Right cardiac atrium (tissue), 5 donors: ENCODE measurements at regions of chr12 and their contacts with region 1.

Region 1: GRCh38 chr12:13196130-13196921 is at the start of gene EMP1:
- DNase-seq: peak; percentile 94 to 97 (median 97)
- ATAC-seq: peak; percentile 90 to 92
- H3K4me3 ChIP-seq: peak within 1 kb of the TSS; percentile 63
- H3K27ac ChIP-seq: peak within 1 kb of the TSS; percentile 99
- H3K4me1 ChIP-seq: peaks cover 14% of the 10 kb centered on the region
- H3K27me3 ChIP-seq: no peaks in the 10 kb centered on the region
- total RNA-seq, gene EMP1: 134 to 401 (median 261) TPM

Region 2: GRCh38 chr12:13114251-13115052 is 81.9 kb before region 1 on chr12:
- intact Hi-C with region 1: loop called in 1 of 4 experiments (anchors 5 kb)
- DNase-seq: peak in 1 of 3 donors; percentile 60
- ATAC-seq: peak in 1 of 2 donors; percentile 28
- H3K4me3 ChIP-seq: no peak overlapping the region
- H3K27ac ChIP-seq: no peak overlapping the region
- H3K4me1 ChIP-seq: peaks cover 5% of the 10 kb centered on the region
- H3K27me3 ChIP-seq: no peaks in the 10 kb centered on the region

Region 3: DNA sequence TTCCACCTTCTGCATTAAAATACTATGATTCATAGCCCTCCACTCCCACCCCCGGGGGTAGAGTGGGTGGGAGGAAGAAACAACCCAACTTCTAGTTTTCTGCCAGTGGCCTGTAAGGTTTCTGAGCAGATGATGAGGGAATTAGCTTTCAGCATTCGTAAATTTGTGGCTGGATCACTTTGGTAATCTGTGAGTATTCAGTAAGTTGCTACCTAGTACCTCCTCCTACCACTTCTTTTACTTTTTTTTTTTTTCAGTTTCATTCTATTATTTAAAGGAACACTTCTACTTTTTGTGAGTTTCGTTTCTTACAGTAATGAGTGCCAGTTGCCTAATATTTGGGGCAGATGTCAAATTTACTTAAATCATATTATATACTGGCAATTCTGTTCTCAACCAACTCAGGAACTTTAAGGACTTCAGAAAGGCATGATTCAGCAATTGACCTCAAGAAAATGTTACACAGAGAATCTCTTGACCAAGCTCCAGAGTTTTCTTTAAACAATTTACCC is 42.2 kb before region 1 on chr12:
- intact Hi-C with region 1: loop called in 1 of 4 experiments (anchors 5 kb)
- DNase-seq: no peak
- ATAC-seq: no peak
- H3K4me3 ChIP-seq: no peak overlapping the region
- H3K27ac ChIP-seq: no peak overlapping the region
- H3K4me1 ChIP-seq: peaks cover 1% of the 10 kb centered on the region
- H3K27me3 ChIP-seq: no peaks in the 10 kb centered on the region